HepG2 (cell line): ENCODE measurements at regions of chr10 and their contacts with region 1.

Region 1: DNA sequence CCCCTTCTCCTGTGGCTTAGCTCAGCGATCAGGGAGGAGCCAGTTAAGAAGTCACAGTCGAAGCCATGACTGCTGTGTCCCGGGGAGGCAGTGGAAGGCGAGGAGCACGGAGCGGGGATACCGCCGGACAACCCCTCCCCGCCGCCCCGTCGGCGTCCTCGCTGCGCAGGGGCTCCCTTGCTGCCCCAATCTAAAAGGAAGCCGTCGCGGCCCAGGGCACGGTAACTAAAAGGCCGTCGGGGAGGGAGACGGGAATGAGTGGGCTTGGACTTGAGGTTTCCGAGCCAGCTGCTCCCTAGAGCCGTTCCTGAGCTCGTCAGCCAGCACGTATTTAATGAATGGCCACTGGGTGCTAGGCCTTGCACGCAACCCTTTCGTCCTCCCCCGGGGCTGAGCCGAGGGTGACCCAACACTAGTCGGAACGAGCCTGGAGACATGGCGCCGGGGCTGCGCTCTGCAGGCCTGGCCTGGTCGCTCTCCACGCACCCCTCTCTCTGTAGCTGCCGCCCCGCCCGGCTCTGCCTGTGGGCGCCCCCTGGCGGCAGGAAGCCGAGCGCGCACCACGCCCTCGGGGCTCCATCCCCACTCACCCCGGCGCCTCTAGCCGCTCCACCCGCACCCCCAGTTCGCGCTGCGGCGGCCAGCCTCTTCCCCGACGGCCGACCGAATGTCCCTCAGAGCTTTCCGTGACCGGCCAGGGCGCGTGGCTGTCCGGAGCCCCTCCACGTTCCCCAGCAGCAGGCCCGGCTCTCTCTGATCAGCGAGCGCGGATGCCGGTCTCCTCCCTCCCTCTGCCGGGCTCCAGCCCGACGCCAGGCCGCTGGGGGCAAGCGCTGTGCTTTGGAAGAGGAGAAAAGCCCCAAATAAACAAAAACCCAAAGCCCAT is 29.3 kb upstream of the KCNK18 start:
- DNase-seq: no peak
- ATAC-seq: peak; percentile 93
- H3K4me3 ChIP-seq: peak overlapping the region in 2 of 3 experiments; percentile 19 to 55; a peak in 1 of 6 replicates
- H3K27ac ChIP-seq: no peak overlapping the region
- H3K4me1 ChIP-seq: peaks cover 17% of the 10 kb centered on the region
- H3K27me3 ChIP-seq: peaks cover 5 to 85% of the 10 kb centered on the region in 2 experiments
- CTCF ChIP-seq: peak; percentile 86
- EP300 ChIP-seq: no peak
- POLR2A ChIP-seq: no peak
- RAD21 ChIP-seq: peak; percentile 77

Region 2: GRCh38 chr10:116796910-116797513 is 371.0 kb before region 1 on chr10:
- CTCF ChIA-PET with region 1: interaction called, 60 read pairs
- POLR2A ChIA-PET with region 1: no interaction called
- in situ Hi-C with region 1: loop called (anchors 5 kb)
- intact Hi-C with region 1: loop called (anchors 1 kb)
- DNase-seq: peak; percentile 60
- ATAC-seq: peak; percentile 96
- H3K4me3 ChIP-seq: no peak overlapping the region
- H3K27ac ChIP-seq: no peak overlapping the region
- H3K4me1 ChIP-seq: no peaks in the 10 kb centered on the region
- H3K27me3 ChIP-seq: peaks cover 0 to 1% of the 10 kb centered on the region in 2 experiments; a peak in 2 of 5 replicates
- CTCF ChIP-seq: peak; percentile 88
- EP300 ChIP-seq: no peak
- POLR2A ChIP-seq: no peak
- RAD21 ChIP-seq: peak; percentile 82

Region 3: DNA sequence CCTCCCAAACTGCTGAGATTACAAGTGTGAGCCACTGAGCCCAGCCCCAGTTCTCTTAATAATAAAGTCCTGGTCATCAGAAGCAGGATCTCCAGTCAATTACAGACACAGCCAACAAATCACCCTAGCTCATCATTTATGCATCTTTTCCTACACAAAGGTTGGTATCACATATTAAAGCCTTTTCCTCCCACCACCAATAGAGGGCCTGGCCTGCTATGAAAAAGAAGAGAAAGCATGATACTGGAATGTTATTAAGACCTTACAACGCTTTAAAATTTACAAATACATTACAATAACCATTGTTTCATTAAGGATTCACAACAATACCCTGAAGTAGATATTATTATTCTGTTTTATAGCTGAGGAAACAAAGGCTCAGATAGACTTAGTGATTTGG is 55.8 kb before region 1 on chr10:
- CTCF ChIA-PET with region 1: no interaction called
- POLR2A ChIA-PET with region 1: no interaction called
- in situ Hi-C with region 1: no loop called
- intact Hi-C with region 1: loop called (anchors 2 kb)
- DNase-seq: peak; percentile 13
- ATAC-seq: peak; percentile 54; the same call in 1 of the 3 replicates
- H3K4me3 ChIP-seq: no peak overlapping the region
- H3K27ac ChIP-seq: no peak overlapping the region
- H3K4me1 ChIP-seq: no peaks in the 10 kb centered on the region
- H3K27me3 ChIP-seq: no peaks in the 10 kb centered on the region; a peak in 1 of 5 replicates
- CTCF ChIP-seq: peak; percentile 16; the same call in 1 of the 2 replicates
- EP300 ChIP-seq: no peak
- POLR2A ChIP-seq: no peak
- RAD21 ChIP-seq: no peak